BJ (cell line): ENCODE measurements at regions of chr5 and their contacts with region 1.

Region 1: DNA sequence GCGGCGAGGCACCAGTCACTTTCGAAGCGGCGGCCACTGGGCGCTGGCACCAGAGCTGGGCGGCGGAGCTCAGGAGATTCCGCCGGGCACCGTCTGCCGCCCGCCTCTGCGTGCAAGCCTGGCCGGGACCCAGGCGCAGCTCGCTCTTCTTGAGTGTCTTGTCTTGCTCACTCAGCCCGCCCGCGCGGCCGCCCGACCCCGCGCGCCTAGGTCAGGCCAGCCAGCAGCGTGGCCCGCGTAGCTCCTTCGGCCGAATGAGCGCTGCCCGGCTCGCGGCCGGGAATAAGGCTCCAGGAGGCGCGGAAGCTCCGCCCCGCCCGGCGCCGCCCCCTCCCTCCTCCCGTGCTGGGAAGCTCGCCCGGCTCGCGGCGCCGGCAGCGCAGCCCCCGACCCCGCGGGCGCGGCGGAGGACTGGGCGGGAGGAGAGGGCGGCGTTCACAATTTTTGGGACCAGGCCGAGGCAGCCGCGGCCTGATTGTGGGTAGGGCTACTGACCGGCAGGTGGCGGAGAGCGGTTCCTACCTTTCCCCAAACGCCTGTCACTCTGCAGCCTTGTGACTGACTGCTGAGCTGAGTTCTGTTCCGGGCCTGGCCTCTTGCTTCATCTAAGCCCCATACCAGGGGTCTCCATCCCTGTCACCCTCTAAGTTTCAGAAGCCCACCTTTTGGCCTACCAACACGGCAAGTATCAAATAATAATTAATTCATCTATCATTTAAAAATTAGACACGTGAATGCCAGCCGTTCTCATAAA is at the start of gene HBEGF:
- DNase-seq: no peak
- H3K4me3 ChIP-seq: peak within 1 kb of the TSS; percentile 76
- H3K27me3 ChIP-seq: no peaks in the 10 kb centered on the region
- CTCF ChIP-seq: peak; percentile 43
- polyA plus RNA-seq, gene HBEGF: 2.4 and 3.1 TPM in 2 replicates

Region 2: DNA sequence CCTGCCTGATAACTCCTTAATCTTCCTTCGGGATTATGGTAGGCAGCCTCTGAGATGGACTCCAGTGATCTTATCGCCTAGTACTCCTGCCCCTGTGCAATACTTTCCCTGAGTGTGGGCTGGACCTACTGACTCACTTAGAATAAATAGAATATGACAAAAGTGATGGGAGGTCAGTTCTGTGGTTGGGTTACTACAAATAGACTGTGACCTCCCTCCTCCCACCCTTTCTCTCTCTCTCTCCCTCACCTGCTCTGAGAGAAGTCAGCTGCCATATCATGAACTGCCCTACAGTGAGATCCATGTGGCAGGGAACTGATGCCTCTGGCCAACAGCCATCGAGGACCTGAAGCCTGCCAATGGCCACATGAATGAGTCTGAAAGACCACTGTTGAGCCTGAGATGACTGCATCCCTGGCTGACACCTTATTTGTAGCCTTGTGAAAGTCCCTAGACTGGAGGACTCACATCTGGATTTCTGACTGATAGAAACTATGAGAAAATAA is 335.2 kb before region 1 on chr5:
- CTCF ChIA-PET with region 1: no interaction called
- POLR2A ChIA-PET with region 1: no interaction called
- DNase-seq: no peak
- H3K4me3 ChIP-seq: no peak overlapping the region
- H3K27me3 ChIP-seq: peaks cover 8% of the 10 kb centered on the region
- CTCF ChIP-seq: no peak

Region 3: DNA sequence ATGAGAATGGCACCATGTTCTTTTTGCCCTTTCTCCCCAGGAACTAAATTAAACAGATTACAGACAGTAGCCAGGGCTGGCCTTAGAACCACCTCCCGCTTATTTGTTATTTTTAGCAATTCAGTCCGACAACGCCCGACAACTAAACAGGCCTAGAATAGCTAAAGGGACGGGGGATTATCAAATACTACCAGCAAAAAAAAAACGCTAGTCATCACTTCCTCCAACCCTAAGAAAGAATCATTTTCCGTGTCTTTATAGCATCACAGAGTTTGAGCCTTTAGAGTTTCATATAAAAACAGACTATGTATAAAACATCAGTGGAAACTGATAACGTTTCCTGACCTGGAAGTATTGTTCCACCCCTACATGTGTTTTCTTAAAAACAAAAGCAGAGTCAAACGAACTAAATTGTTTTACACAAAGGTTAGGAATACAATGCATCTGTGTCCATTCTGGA is 78.9 kb before region 1 on chr5:
- CTCF ChIA-PET with region 1: interaction called, 10 read pairs
- POLR2A ChIA-PET with region 1: no interaction called
- DNase-seq: no peak
- H3K4me3 ChIP-seq: no peak overlapping the region
- H3K27me3 ChIP-seq: no peaks in the 10 kb centered on the region
- CTCF ChIP-seq: no peak

Region 4: DNA sequence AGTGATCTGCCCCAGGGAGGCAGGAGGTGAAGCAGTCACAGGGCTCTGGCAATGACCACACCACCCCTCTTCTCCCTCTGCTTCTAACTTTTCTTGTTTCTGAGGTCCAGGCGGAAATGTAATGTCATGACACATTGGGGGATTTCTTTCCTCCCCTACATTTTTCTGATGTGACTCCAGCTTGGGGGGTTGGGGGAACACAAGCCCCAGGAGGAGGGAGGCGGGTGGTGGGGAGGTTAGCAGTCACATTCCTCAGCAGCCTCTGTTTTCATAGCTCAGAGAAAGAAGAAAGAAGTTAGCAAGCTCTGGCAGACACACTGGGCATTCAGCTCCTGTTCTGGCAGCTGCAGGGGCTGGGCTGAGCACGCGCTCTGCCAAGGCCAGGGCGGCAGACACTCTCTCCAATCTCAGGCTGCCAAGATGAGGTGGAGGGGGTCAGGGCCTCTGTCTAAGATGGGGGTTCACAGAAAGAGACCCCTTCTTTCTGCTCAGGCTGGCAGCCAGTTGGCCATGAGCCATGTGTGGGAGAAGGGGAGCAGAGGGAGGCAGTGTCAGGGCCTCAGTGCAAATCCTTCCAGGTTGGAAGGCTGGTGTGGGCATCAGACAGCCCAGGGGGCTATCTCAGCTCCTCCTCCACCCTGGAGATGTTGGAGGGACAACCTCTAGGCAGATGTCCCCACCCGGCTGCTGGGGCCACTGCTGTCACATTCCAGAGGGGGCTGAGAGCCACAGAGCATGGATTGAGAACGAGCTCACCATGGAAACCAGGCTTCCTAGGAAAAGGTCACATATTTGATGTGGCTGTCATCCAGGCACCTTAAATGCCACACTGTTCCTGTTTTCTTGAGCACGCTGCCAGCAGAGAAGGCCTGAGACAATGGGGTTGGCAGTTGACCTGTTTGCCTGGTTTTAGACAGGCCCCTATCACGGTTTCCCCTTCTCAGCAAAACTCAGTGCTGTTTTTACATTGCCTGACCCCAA is 23.5 kb before region 1 on chr5:
- CTCF ChIA-PET with region 1: interaction called, 22 read pairs
- POLR2A ChIA-PET with region 1: no interaction called
- DNase-seq: peak; percentile 77
- H3K4me3 ChIP-seq: no peak overlapping the region
- H3K27me3 ChIP-seq: no peaks in the 10 kb centered on the region
- CTCF ChIP-seq: no peak

Region 5: DNA sequence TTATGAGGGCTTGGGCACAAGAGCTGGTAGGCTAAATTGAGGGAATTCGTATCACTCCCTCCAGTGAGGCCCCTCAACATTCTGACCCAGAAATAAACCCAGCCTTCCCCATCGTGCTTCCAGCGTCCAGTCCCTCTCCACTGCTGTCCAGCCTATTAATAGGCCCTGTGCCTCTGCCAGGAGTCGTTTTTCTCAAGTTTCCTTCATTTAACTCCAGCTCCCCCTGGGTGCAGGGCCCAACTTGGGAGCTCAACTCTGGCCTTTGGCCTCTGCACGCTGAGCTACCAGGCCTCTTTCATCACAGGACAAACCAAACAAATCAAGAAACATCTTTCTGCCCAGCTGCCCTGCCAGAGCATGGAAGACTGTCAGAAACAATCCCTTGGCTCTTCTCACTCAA is 10.1 kb before region 1 on chr5:
- CTCF ChIA-PET with region 1: interaction called, 14 read pairs
- POLR2A ChIA-PET with region 1: no interaction called
- DNase-seq: no peak
- H3K4me3 ChIP-seq: no peak overlapping the region
- H3K27me3 ChIP-seq: no peaks in the 10 kb centered on the region
- CTCF ChIP-seq: no peak

Region 6: DNA sequence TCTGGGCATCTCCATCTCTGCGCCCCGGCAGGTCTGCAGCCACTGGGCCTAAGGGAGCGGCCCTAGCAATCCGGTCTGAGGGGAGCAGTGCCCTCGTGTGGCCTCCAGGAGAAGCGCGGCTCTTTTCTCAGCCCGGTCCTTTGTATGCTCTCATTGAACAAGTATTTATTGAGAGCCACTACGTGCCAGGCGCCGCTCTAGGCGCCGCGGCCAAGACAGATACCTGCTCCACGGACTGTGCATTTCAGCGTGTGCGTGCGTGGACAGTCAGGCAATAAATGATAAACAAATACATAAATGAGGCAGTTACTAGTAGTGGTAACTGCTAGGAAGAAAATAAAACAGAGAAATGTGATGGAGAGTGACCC is 11.2 kb after region 1 on chr5:
- CTCF ChIA-PET with region 1: interaction called, 28 read pairs
- POLR2A ChIA-PET with region 1: no interaction called
- DNase-seq: peak; percentile 41
- H3K4me3 ChIP-seq: no peak overlapping the region
- H3K27me3 ChIP-seq: no peaks in the 10 kb centered on the region
- CTCF ChIP-seq: peak; percentile 95

Region 7: DNA sequence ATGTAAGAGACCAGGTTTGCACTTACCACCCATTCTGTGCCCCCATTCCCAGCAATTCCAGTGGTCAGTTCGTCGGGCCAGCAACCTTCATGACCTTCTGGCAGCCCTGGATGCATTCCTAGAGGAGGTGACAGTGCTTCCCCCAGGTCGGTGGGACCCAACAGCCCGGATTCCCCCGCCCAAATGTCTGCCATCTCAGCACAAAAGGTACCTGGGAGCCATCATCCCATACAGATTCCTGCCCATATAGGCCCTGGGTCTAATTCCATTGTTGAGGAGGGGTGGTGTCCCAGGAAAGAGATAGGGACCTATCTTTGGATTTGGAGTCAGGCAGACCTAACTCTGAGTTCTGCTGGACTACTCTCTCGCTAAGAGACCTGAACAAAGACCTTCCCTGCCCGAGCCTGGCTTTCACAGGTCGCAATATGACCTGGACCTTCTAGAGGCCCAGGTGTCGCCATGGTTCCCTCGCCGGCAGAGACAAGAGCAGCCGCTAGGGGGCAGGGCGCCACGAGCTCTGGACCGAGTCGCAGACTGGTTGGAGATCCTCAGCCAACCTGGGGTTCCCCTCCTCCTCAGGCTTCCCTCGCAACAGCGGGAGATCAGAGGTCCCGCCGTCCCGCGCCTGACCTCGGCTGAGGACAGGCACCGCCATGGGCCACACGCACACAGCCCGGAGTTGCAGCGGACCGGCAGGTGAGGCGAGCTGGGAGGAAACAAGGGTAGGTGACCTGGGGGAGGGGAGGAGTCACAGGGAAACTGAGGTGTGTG is 16.5 kb after region 1 on chr5:
- CTCF ChIA-PET with region 1: interaction called, 28 read pairs
- POLR2A ChIA-PET with region 1: no interaction called
- DNase-seq: no peak
- H3K4me3 ChIP-seq: peak overlapping the region; percentile 29
- H3K27me3 ChIP-seq: no peaks in the 10 kb centered on the region
- CTCF ChIP-seq: peak; percentile 94